Left cardiac atrium (tissue), 4 donors: ENCODE measurements at regions of chr3 and their contacts with region 1.

Region 1: GRCh38 chr3:155701882-155702465 is 42.9 kb downstream of the PLCH1 start:
- DNase-seq: no peak
- ATAC-seq: peak; percentile 55 to 77

Region 2: DNA sequence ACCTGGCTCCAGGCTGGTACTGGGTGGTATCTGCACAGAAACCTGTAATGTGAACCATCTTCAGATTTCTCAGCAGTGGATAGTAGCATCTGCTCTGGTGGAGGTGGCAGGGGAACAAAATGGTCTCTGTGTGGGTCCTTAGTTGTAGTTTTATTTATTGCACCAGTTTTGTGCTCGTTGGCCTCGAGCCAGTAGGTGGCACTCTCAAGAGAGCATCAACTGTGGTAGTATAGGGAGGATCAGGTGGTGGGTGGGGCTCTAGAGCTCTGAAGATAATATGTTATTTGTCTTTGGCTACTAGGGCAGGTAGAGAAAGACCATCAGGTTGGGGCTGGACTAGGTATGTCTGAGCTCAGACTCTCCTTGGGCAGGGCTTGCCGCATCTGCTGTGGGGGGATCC is 1018.0 kb before region 1 on chr3:
- intact Hi-C with region 1: no loop called
- DNase-seq: no peak
- ATAC-seq: no peak

Region 3: DNA sequence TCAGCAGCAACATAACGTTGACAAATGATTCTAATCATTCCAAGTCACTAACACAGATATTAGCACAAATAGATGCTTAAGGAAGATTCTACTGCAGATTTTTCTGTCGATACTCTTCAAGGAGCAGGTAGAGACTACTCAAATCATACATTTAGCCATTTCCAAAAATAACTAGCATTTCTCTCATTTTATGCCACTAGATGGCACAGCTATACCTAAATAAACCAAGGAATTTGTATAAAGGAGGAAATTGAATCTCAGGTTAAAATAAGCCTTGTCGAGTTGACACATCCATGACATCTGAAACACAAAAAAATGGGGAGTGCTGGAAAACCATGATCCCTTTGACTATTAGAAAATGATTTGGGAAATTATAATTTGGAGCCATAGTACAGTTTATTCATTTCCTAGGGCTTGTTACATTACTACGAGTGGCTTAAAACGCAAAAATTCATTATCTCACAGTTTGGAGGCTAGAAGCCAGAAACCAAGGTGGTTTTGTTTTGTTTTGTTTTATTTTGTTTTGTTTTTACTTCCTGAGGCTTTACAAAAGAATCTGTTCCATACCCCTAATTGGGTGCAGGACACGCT is 349.0 kb before region 1 on chr3:
- intact Hi-C with region 1: loop called (anchors 1 to 5 kb)
- DNase-seq: no peak
- ATAC-seq: peak in 1 of 2 donors; percentile 65

Region 4: GRCh38 chr3:155382396-155383042 is 319.5 kb before region 1 on chr3:
- intact Hi-C with region 1: loop called (anchors 1 to 10 kb)
- DNase-seq: peak; percentile 70
- ATAC-seq: peak; percentile 79 to 81